Tibial artery (tissue), 4 donors: ENCODE measurements at regions of chr16 and their contacts with region 1.

Region 1: DNA sequence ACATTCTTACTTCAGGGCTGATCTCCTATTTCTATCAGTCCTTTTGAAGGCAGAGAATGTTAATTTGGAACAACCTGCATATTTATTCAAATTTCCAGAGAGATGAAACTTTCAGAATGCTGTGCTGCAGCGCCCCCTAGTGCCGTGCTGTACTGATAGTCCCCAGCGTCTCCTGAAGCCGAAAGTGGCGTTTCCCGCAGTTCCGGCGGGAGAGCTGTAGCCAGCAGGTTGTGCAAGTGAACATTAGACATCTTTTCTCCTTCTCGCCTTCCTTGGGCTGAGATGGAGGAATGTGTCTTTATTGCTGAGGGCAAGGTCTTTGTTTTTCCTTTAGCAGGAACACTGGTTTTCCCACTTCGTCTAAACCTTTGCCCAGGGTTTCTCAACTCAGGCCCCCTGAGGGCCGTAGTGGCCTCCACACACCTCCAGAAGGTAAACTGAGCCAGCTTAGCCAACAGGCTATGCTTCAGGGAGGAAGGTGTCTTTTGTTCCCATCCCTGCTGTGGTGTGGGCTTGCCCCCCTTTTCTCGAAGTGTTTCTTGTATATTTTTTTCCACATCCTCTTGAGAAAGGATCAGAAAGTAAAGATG is 26.4 kb downstream of the USP10 start:
- DNase-seq: peak; percentile 92 to 93
- H3K4me3 ChIP-seq: no peak overlapping the region
- H3K27ac ChIP-seq: peak overlapping the region in 1 of 2 donors; percentile 26
- H3K4me1 ChIP-seq: peaks cover 0 to 49% (median 25%) of the 10 kb centered on the region in 4 donors
- H3K27me3 ChIP-seq: no peaks in the 10 kb centered on the region
- CTCF ChIP-seq: peak; percentile 90 to 94

Region 2: DNA sequence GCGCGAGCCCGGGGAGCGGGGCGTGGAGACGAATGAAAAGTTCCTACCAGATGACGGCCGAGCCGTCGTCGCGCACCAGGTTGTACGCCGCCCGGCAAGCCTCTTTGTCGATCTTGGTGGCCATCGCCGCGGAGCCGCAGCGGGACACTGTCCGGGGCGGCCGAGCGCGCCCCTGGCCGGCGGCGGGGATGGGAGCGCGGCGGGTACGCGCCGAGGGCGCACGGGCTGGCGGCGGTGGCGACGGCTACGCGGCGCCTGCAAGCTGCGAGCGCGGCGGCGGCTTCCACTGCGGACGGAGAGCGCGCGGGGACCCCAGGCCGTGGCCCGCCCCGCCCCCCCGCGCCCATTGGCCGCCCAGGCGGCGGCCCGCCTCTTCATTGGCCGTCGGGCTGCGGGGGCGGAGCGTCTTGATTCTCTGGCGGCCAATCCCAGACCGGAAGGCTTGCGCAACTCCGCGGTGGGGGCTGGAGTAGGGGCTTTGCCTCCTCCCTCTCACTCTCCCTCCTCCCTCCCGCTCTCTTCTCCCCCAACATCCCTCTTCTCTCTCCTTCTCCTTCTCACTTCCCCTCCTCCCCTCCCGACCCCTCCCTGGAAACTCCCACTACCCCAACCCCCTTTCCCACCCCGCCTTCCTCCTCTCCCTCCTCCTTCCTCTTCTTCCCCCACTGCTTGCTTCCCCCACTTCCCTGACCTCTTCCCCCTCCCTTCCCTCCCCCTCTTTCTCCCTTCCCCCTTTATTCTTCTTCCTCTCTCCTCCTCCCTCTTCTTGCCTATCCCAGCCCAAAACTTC is 108.2 kb before region 1 on chr16 and contains the start of gene COTL1:
- intact Hi-C with region 1: loop called (anchors 5 kb)
- DNase-seq: peak; percentile 97 to 98
- H3K4me3 ChIP-seq: peak within 1 kb of the TSS; percentile 59 to 80
- H3K27ac ChIP-seq: peak within 1 kb of the TSS; percentile 65 to 69
- H3K4me1 ChIP-seq: peaks cover 4 to 28% (median 23%) of the 10 kb centered on the region in 4 donors
- H3K27me3 ChIP-seq: no peaks in the 10 kb centered on the region
- CTCF ChIP-seq: no peak

Region 3: GRCh38 chr16:84864326-84864955 is 138.3 kb after region 1 on chr16:
- intact Hi-C with region 1: no loop called
- DNase-seq: no peak
- H3K4me3 ChIP-seq: no peak overlapping the region
- H3K27ac ChIP-seq: no peak overlapping the region
- H3K4me1 ChIP-seq: no peaks in the 10 kb centered on the region
- H3K27me3 ChIP-seq: no peaks in the 10 kb centered on the region
- CTCF ChIP-seq: no peak